HEK293T (cell line): ENCODE measurements at regions of chr11 and their contacts with region 1.

Region 1: GRCh38 chr11:75577207-75577606 is 15.2 kb downstream of the SERPINH1 start:
- DNase-seq: peak; percentile 79

Region 2: DNA sequence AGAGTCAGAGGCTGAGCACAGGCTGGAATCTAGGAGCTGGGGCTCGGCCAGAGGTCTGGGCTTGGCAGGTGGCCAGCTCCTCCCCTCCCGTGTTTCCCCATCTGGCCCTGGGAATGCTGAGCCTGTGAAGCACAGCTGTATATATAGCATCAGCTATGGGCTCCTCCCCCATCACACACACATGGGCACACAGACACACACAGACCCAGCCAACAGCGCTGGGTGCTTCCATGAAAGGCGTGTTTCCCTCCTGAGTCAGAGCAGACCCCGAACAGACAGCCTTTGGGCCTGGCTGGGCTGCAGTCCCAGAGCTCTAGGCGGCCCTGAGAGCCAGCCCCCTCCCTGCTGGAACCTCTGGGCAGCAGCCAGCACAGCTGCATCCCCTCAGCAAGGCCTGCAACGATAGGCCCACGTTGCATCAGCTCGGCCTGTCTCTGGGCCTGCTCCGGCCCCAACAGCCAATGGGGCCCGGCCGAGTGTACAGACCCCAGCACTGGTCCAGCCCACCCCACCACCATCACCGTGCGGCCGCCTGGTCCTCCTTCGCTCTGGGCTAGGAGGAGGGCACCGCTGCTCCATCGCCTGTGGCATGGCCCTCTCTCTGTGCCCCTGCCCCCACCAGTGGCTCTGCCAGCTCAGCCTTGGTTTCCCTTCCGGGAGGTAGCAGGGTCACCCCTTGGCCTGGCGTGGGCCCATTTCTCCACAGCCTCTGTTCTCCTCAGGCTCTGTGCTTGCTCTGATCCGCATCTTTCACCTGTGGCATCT is 22.8 kb before region 1 on chr11:
- CTCF ChIA-PET with region 1: interaction called, 9 read pairs
- POLR2A ChIA-PET with region 1: interaction called, 11 read pairs
- DNase-seq: no peak